ENCODE measurements at regions of chr4 and their contacts with region 1.

Region 1: DNA sequence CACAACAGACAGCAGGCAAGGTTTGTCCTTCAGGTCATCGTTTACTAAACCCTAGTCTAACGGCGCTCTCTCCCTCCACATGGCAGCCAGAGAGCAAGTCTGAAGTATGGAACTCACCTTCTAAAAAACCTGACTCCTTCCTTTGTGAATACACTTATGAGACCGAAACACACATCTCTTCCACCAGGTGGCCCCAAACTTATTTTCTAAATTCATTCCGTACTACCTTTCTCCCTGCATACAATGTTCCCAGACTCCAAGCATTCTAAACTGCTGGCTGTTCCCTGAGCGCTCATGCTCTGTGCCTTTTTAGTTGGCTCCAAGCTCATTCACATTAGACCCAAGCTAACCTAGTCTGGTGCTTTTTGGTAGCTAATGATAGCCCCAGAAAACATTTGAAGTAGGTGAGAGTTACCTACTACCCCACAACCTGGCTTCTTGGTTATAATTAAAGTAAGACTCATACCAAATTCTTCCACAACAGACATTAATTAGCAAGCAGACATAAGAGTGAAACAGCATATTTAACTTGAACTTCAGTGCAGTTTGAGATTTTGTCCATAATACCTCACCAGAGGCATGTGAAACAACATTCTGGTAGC is 67.6 kb upstream of the DCLK2 start:
- DNase-seq: no peak
- H3K4me3 ChIP-seq: no peak overlapping the region
- H3K27ac ChIP-seq: no peak overlapping the region
- H3K4me1 ChIP-seq: peaks cover 10 to 46% (median 44%) of the 10 kb centered on the region in 4 donors
- H3K27me3 ChIP-seq: no peaks in the 10 kb centered on the region
- CTCF ChIP-seq: peak; percentile 63 to 75 (median 67)
- EP300 ChIP-seq: no peak
- POLR2A ChIP-seq: no peak

Region 2: GRCh38 chr4:150072906-150073714 is 62.5 kb after region 1 on chr4:
- intact Hi-C with region 1: loop called (anchors 5 kb)
- DNase-seq: no peak
- H3K4me3 ChIP-seq: no peak overlapping the region
- H3K27ac ChIP-seq: peak overlapping the region; percentile 65 to 81 (median 74)
- H3K4me1 ChIP-seq: peaks cover 7 to 41% (median 30%) of the 10 kb centered on the region in 4 donors
- H3K27me3 ChIP-seq: no peaks in the 10 kb centered on the region
- CTCF ChIP-seq: no peak
- EP300 ChIP-seq: no peak
- POLR2A ChIP-seq: no peak

Region 3: DNA sequence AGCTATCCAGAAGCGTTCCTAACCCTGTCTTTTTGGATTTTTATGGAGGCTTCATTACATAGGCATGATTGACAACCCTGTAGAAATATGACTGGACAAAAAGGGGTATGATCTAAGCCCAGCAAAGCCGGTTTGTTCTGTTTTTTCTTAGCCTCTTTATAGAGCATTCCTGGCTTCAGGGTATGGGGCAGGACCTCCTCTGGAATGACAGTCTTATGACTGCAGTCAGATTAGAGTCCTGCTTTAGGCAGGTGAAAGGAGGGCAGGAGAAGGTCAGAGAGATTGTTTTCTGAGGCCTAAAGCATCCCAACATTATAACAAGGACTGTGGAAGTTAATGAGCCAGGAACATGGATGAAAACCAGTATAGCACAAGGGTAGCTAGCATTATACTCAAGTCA is 205.0 kb after region 1 on chr4:
- intact Hi-C with region 1: no loop called
- DNase-seq: no peak
- H3K4me3 ChIP-seq: no peak overlapping the region
- H3K27ac ChIP-seq: no peak overlapping the region
- H3K4me1 ChIP-seq: peaks cover 7 to 30% (median 25%) of the 10 kb centered on the region in 4 donors
- H3K27me3 ChIP-seq: no peaks in the 10 kb centered on the region
- CTCF ChIP-seq: no peak
- EP300 ChIP-seq: no peak
- POLR2A ChIP-seq: no peak

Measured in esophagus muscularis mucosa (tissue), 4 donors.